Activated B cell treated with CpG ODN at 0.5 μM for 24 hours (primary cell): ENCODE measurements at regions of chr2 and their contacts with region 1.

Region 1: GRCh38 chr2:48107326-48107925 is 201.1 kb upstream of the FBXO11 start:
- DNase-seq: no peak
- ATAC-seq: no peak
- H3K4me3 Mint-ChIP-seq: no peak overlapping the region
- H3K27ac Mint-ChIP-seq: no peak overlapping the region
- H3K4me1 Mint-ChIP-seq: peaks cover 18% of the 10 kb centered on the region
- H3K27me3 Mint-ChIP-seq: no peaks in the 10 kb centered on the region
- CTCF ChIP-seq: no peak

Region 2: GRCh38 chr2:47334356-47335136 is 772.9 kb before region 1 on chr2:
- CTCF ChIA-PET with region 1: interaction called, 6 read pairs
- POLR2A ChIA-PET with region 1: no interaction called
- intact Hi-C with region 1: loop called (anchors 1 kb)
- DNase-seq: no peak
- ATAC-seq: no peak
- H3K4me3 Mint-ChIP-seq: no peak overlapping the region
- H3K27ac Mint-ChIP-seq: no peak overlapping the region
- H3K4me1 Mint-ChIP-seq: peaks cover 22% of the 10 kb centered on the region
- H3K27me3 Mint-ChIP-seq: no peaks in the 10 kb centered on the region
- CTCF ChIP-seq: no peak

Region 3: GRCh38 chr2:47437287-47437686 is 670.1 kb before region 1 on chr2:
- CTCF ChIA-PET with region 1: interaction called, 5 read pairs
- POLR2A ChIA-PET with region 1: no interaction called
- intact Hi-C with region 1: loop called (anchors 1 kb)
- DNase-seq: no peak
- ATAC-seq: no peak
- H3K4me3 Mint-ChIP-seq: no peak overlapping the region
- H3K27ac Mint-ChIP-seq: no peak overlapping the region
- H3K4me1 Mint-ChIP-seq: no peaks in the 10 kb centered on the region
- H3K27me3 Mint-ChIP-seq: no peaks in the 10 kb centered on the region
- CTCF ChIP-seq: no peak

Region 4: DNA sequence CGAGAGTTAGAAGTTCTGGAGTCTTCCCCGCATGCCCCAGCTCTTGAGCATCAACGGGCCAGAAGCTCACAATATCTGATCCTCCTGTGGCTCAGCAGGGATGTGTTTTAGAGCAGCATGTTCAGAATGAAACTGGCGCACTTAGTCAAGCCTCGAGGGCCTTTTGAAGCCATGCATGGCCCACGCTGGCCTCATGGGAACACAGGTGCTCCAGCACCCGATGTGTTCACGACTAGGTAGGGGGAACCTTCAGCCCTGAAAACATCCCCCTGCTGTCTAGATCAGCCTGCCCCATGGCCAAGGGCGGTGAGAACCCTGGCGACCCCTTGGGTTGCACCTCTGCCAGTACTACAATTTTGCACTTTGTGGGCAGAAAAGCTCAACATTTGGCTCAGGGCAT is 291.7 kb before region 1 on chr2:
- CTCF ChIA-PET with region 1: no interaction called
- POLR2A ChIA-PET with region 1: no interaction called
- intact Hi-C with region 1: loop called (anchors 1 kb)
- DNase-seq: no peak
- ATAC-seq: peak; percentile 91
- H3K4me3 Mint-ChIP-seq: no peak overlapping the region
- H3K27ac Mint-ChIP-seq: peak overlapping the region; percentile 69
- H3K4me1 Mint-ChIP-seq: peaks cover 18% of the 10 kb centered on the region
- H3K27me3 Mint-ChIP-seq: no peaks in the 10 kb centered on the region
- CTCF ChIP-seq: no peak

Region 5: DNA sequence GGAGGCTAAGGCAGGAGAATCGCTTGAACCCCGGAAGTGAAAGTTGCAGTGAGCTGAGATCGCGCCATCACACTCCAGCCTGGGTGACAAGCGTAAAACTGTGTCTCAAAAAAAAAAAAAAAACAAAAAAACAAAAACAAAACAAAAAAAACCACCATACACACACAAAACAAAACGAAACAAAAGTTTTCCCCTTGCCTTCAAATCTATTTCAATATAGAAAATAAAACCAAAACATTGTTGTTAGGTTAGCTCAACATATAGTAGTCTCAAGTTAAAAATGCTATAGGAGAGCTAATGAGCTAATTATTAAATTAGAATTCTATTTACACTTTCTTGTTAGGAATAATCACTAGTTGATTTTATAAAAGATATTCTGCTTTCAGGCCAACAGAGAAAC is 244.5 kb before region 1 on chr2:
- CTCF ChIA-PET with region 1: interaction called, 52 read pairs
- POLR2A ChIA-PET with region 1: interaction called, 3 read pairs
- intact Hi-C with region 1: no loop called
- DNase-seq: no peak
- ATAC-seq: no peak
- H3K4me3 Mint-ChIP-seq: no peak overlapping the region
- H3K27ac Mint-ChIP-seq: no peak overlapping the region
- H3K4me1 Mint-ChIP-seq: peaks cover 57% of the 10 kb centered on the region
- H3K27me3 Mint-ChIP-seq: no peaks in the 10 kb centered on the region
- CTCF ChIP-seq: no peak

Region 6: DNA sequence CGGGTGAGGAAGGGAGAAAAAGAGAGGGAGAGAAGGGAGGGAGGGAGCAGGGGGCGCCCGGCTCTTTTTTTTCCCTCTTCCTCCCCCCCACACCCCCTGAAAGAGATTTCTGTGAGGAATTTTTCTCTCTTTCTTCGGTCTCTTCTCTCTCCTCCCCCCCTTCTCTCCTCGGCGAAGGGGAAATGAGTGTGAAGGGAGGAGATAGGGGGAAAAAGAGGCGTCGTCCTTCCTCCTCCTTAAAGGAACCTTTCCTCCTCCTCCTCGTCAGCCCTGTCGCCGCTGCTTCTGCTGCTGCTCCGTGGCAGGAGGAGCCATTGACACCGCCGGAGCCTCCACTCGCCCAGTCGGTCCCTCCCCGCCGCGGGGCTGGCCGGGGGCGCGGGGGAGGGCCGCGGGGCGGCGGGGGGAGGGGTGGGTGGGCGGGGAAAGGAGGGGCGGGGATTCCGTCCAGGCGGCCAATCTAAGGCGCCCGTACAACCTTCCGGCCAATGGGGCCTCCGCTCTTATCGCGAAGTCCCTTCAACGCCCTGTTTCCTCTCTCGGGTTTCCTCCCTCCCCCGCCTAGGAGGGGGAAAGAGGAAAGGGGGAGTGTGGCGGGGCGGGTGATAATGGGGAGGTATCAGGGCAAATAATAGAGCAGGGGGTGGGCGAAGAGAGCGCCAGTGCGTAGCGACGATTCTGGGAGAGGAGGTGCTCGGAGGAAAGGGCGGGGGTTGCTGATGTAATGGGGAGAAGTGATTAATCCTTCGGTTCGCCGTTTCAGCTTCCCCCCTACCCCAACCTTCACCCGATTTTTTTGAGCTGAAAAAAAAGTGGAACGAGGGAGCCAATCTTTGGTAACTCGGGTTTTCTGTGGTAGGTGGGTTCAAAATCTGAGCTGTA is 201.0 kb before region 1 on chr2 and contains the start of gene FBXO11:
- CTCF ChIA-PET with region 1: interaction called, 12 read pairs
- POLR2A ChIA-PET with region 1: interaction called, 6 read pairs
- intact Hi-C with region 1: loop called (anchors 1 kb)
- DNase-seq: peak; percentile 85
- ATAC-seq: peak; percentile 85
- H3K4me3 Mint-ChIP-seq: peak within 1 kb of the TSS; percentile 93
- H3K27ac Mint-ChIP-seq: peak within 1 kb of the TSS; percentile 99
- H3K4me1 Mint-ChIP-seq: peaks cover 42% of the 10 kb centered on the region
- H3K27me3 Mint-ChIP-seq: no peaks in the 10 kb centered on the region
- CTCF ChIP-seq: no peak
- total RNA-seq, gene FBXO11: 77.8 and 89.1 TPM in 2 replicates

Region 7: DNA sequence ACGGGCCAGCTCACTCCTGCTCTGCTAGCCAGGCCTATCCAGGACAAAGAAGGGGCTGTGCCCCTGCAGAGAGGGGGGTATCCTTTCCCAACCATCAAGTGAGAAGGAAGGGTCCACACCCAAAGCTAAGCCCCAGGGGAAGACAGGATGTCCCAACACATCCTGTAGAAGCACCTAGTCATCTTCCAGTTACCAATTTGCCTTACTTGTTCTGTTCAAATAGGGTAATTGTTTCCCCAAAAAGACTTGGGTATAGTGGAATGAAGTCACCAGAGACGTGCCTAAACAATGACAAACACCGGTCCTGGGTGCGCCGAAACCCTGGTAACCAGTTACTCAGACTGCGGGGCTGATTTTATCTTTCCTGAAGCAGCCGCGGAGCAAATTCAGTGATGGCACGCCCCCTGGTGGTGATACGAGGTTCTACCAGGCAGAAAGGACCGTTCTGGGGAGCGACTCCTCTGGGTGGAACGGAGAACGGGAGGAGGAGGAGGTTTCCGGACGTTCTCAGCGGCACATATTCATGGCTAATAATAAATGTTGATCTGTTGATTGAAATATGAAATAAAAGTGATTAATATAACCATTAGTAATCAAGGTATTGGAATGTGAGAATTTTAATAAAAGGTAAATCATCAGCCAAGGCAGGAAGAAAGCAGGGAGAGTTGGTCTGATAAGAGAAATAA is 313.2 kb after region 1 on chr2:
- CTCF ChIA-PET with region 1: interaction called, 27 read pairs
- POLR2A ChIA-PET with region 1: no interaction called
- intact Hi-C with region 1: no loop called
- DNase-seq: peak; percentile 80
- ATAC-seq: peak; percentile 91
- H3K4me3 Mint-ChIP-seq: peak overlapping the region; percentile 4
- H3K27ac Mint-ChIP-seq: no peak overlapping the region
- H3K4me1 Mint-ChIP-seq: peaks cover 14% of the 10 kb centered on the region
- H3K27me3 Mint-ChIP-seq: peaks cover 8% of the 10 kb centered on the region
- CTCF ChIP-seq: peak; percentile 66